ENCODE measurements at regions of chrX and their contacts with region 1.

Region 1: DNA sequence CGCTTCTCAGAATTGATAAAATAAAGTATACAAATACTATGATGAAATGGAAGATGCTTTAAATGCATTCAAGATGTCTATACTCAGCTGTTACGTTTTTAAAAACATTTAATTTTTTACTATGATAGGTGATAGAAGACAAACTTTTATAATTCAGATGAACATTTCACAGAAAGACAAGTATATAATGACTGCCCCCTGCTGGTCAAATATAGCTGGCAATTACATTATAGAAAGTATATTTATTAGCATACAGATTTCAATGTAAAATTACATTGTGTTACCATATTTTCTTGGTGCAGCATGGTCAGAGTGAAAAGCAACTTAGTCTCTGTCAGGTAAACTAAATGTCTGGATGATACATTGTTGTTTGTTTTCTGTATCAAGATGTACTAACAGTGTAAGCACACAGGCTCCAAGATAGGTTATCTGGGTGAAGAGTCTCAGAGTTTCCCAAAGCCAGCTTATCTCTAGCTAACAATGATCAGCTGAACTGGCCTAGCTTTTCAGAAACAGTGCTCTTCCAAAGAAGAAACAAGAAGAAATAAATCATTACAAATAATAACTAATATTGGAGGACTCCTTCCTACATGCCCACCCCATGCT is 54.1 kb downstream of the SRPX start:
- DNase-seq: peak in 4 of 35 experiments; percentile 1 to 40 (median 5)
- ATAC-seq: no peak
- H3K4me3 ChIP-seq: no peak overlapping the region
- H3K4me3 Mint-ChIP-seq: no peak overlapping the region
- H3K27ac ChIP-seq: no peak overlapping the region
- H3K27ac Mint-ChIP-seq: no peak overlapping the region
- H3K4me1 ChIP-seq: no peaks in the 10 kb centered on the region
- H3K4me1 Mint-ChIP-seq: no peaks in the 10 kb centered on the region
- H3K27me3 ChIP-seq: no peaks in the 10 kb centered on the region
- H3K27me3 Mint-ChIP-seq: peaks cover 0 to 23% of the 10 kb centered on the region in 2 donors

Region 2: GRCh38 chrX:37776283-37776986 is 390.1 kb before region 1 on chrX:
- CTCF ChIA-PET with region 1: no interaction called
- POLR2A ChIA-PET with region 1: no interaction called
- DNase-seq: no peak
- ATAC-seq: peak in 3 of 4 experiments; percentile 57 to 73 (median 62)
- H3K4me3 ChIP-seq: no peak overlapping the region
- H3K4me3 Mint-ChIP-seq: peak overlapping the region in 1 of 3 donors; percentile 56
- H3K27ac ChIP-seq: peak overlapping the region; percentile 49
- H3K27ac Mint-ChIP-seq: peak overlapping the region; percentile 52 to 66
- H3K4me1 ChIP-seq: peaks cover 8 to 13% of the 10 kb centered on the region in 2 experiments
- H3K4me1 Mint-ChIP-seq: peaks cover 25 to 26% (median 25%) of the 10 kb centered on the region in 3 donors
- H3K27me3 ChIP-seq: no peaks in the 10 kb centered on the region
- H3K27me3 Mint-ChIP-seq: no peaks in the 10 kb centered on the region

Region 3: DNA sequence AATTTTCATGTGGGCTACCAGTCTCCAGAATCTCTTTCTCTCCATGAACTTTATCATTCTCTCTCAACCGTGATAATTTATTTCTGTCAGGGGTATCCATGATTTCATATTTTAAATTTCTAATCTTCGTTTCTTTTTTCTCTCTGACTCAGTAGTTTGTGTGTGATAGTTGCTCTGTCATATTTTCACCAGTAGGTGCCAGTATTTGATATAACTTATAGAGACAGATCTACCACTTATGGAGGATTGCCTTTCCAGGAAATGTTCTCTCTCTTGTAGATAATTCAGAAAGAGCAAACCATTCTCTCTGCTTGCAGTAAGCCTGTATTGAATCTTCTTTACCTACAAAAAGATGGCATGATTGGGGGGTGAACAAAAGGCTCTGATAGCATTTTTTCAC is 239.9 kb before region 1 on chrX:
- CTCF ChIA-PET with region 1: interaction called in 1 of 2 experiments, 11 read pairs
- POLR2A ChIA-PET with region 1: no interaction called
- DNase-seq: peak in 1 of 35 experiments; percentile 33
- ATAC-seq: peak in 1 of 4 experiments; percentile 46
- H3K4me3 ChIP-seq: no peak overlapping the region
- H3K4me3 Mint-ChIP-seq: no peak overlapping the region
- H3K27ac ChIP-seq: no peak overlapping the region
- H3K27ac Mint-ChIP-seq: no peak overlapping the region
- H3K4me1 ChIP-seq: no peaks in the 10 kb centered on the region
- H3K4me1 Mint-ChIP-seq: peaks cover 0 to 3% (median 0%) of the 10 kb centered on the region in 3 donors
- H3K27me3 ChIP-seq: no peaks in the 10 kb centered on the region
- H3K27me3 Mint-ChIP-seq: peaks cover 2 to 23% of the 10 kb centered on the region in 2 donors

Region 4: GRCh38 chrX:38275615-38276014 is 109.0 kb after region 1 on chrX:
- CTCF ChIA-PET with region 1: no interaction called
- POLR2A ChIA-PET with region 1: no interaction called
- DNase-seq: no peak
- ATAC-seq: no peak
- H3K4me3 ChIP-seq: no peak overlapping the region
- H3K4me3 Mint-ChIP-seq: no peak overlapping the region
- H3K27ac ChIP-seq: no peak overlapping the region
- H3K27ac Mint-ChIP-seq: no peak overlapping the region
- H3K4me1 ChIP-seq: no peaks in the 10 kb centered on the region
- H3K4me1 Mint-ChIP-seq: no peaks in the 10 kb centered on the region
- H3K27me3 ChIP-seq: no peaks in the 10 kb centered on the region
- H3K27me3 Mint-ChIP-seq: no peaks in the 10 kb centered on the region